GM12878 (cell line): ENCODE measurements at regions of chr6 and their contacts with region 1.

Region 1: GRCh38 chr6:45714741-45715507 is 300.7 kb downstream of the CLIC5 start:
- DNase-seq: peak; percentile 48
- ATAC-seq: peak; percentile 54
- H3K4me3 ChIP-seq: no peak overlapping the region
- H3K27ac ChIP-seq: no peak overlapping the region
- H3K4me1 ChIP-seq: peaks cover 16% of the 10 kb centered on the region
- H3K27me3 ChIP-seq: no peaks in the 10 kb centered on the region
- CTCF ChIP-seq: peak; percentile 61 to 89 (median 75)
- EP300 ChIP-seq: no peak
- POLR2A ChIP-seq: no peak
- RAD21 ChIP-seq: peak; percentile 93

Region 2: DNA sequence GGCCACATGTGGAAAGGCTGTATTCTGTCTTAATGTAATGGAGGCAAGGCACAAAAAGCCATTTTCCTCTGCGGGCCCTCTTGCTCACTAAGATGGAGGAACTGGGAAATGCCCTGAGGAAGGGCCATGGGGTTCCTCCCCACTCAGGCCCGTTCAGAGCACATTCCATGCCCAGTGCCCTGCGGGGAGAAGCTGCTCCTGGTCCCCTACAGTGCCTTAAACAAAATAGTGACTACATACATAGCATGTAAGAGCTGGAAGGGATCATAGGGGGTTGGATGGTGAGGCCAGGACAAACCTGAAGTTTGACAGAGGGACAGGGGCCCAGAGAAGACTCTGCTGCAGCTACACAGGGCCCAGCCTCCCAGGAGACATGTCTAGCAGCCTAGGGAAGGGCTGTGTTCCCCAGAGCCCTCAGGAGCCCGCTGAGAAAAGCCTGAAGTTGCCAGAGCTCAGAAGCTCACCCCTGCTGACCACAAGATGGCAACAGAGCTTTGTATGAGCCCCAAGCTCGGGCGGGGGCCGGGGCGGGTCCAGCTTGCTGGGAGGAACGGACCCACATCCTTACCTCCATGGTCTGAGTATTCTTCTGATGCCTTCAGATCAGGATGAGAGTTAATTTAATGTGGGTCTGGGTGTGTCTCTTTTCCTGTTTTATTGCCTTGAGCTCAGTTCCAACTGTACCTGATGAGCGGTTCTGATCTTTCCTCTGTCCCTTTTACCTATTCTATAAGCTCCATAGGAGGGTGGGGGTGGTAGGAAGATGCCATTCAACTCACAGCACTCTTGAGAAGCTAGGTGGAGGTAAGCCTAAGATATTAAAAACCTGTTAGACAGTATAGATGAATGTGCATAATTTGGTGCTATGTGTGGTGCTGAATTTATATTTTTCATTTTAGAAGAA is 1084.5 kb before region 1 on chr6:
- CTCF ChIA-PET with region 1: interaction called, 25 read pairs
- POLR2A ChIA-PET with region 1: no interaction called
- RAD21 ChIA-PET with region 1: interaction called, 20 read pairs
- SMC1A ChIA-PET with region 1: interaction called, 8 read pairs
- in situ Hi-C with region 1: no loop called
- intact Hi-C with region 1: no loop called
- DNase-seq: no peak
- ATAC-seq: peak; percentile 88
- H3K4me3 ChIP-seq: no peak overlapping the region
- H3K27ac ChIP-seq: no peak overlapping the region
- H3K4me1 ChIP-seq: no peaks in the 10 kb centered on the region
- H3K27me3 ChIP-seq: peaks cover 1 to 3% of the 10 kb centered on the region in 2 experiments; a peak in 2 of 4 replicates
- CTCF ChIP-seq: peak; percentile 33 to 59 (median 49); a peak in 5 of 6 replicates
- EP300 ChIP-seq: no peak
- POLR2A ChIP-seq: no peak
- RAD21 ChIP-seq: peak; percentile 36; the same call in 1 of the 2 replicates

Region 3: DNA sequence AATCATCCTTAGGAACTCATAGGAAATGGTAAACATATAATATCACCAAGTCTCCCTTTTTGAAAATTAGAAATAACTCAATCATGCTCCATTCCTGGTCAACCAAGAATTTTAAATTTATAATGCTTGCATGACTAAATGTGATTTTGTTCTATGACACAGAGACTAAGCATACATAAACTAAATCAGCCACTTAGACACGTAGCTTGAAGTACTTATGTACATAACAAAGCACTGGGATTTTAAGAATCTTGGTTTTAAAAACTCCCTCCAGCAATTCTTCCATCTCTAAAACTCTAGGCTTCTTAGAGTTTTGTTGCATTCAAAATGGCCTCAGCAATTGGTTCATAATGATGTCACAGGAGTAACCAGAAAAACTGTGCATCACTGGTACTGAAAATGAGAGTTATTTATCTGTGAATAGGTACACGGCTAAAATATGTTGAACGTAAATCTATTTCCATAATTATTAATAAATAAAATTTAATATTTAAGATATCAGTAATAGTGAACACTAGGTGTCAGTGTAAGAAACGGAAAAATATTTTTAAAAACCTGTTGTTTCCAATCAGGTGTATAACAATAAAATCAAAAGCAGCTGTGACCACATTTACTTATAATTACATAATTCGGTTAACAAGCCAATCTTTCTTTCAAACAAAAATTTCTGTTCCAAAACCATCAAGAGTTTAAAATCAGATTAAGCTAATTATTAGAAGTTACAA is 628.4 kb before region 1 on chr6:
- CTCF ChIA-PET with region 1: interaction called, 12 read pairs
- POLR2A ChIA-PET with region 1: no interaction called
- RAD21 ChIA-PET with region 1: interaction called, 8 read pairs
- SMC1A ChIA-PET with region 1: interaction called, 7 read pairs
- in situ Hi-C with region 1: no loop called
- intact Hi-C with region 1: loop called (anchors 5 kb)
- DNase-seq: no peak
- ATAC-seq: no peak
- H3K4me3 ChIP-seq: no peak overlapping the region
- H3K27ac ChIP-seq: no peak overlapping the region
- H3K4me1 ChIP-seq: no peaks in the 10 kb centered on the region
- H3K27me3 ChIP-seq: no peaks in the 10 kb centered on the region; a peak in 1 of 4 replicates
- CTCF ChIP-seq: no peak
- EP300 ChIP-seq: no peak
- POLR2A ChIP-seq: no peak
- RAD21 ChIP-seq: no peak

Region 4: GRCh38 chr6:45500924-45501816 is 213.8 kb before region 1 on chr6:
- CTCF ChIA-PET with region 1: interaction called, 23 read pairs
- POLR2A ChIA-PET with region 1: no interaction called
- RAD21 ChIA-PET with region 1: interaction called, 11 read pairs
- SMC1A ChIA-PET with region 1: interaction called, 6 read pairs
- in situ Hi-C with region 1: no loop called
- intact Hi-C with region 1: no loop called
- DNase-seq: no peak
- ATAC-seq: peak; percentile 66
- H3K4me3 ChIP-seq: no peak overlapping the region
- H3K27ac ChIP-seq: no peak overlapping the region
- H3K4me1 ChIP-seq: no peaks in the 10 kb centered on the region
- H3K27me3 ChIP-seq: no peaks in the 10 kb centered on the region; a peak in 1 of 4 replicates
- CTCF ChIP-seq: peak; percentile 11 to 50 (median 46); a peak in 3 of 6 replicates
- EP300 ChIP-seq: no peak
- POLR2A ChIP-seq: no peak
- RAD21 ChIP-seq: peak; percentile 38; the same call in 1 of the 2 replicates

Region 5: GRCh38 chr6:45737331-45738056 is 22.6 kb after region 1 on chr6:
- CTCF ChIA-PET with region 1: interaction called, 19 read pairs
- POLR2A ChIA-PET with region 1: interaction called, 3 read pairs
- RAD21 ChIA-PET with region 1: interaction called, 10 read pairs
- SMC1A ChIA-PET with region 1: interaction called, 23 read pairs
- in situ Hi-C with region 1: no loop called
- intact Hi-C with region 1: loop called (anchors 1 kb)
- DNase-seq: peak; percentile 77
- ATAC-seq: peak; percentile 83
- H3K4me3 ChIP-seq: no peak overlapping the region
- H3K27ac ChIP-seq: peak overlapping the region; percentile 42; the same call in 1 of the 2 replicates
- H3K4me1 ChIP-seq: peaks cover 20% of the 10 kb centered on the region
- H3K27me3 ChIP-seq: no peaks in the 10 kb centered on the region; a peak in 2 of 4 replicates
- CTCF ChIP-seq: no peak
- EP300 ChIP-seq: peak; percentile 92 to 96
- POLR2A ChIP-seq: no peak
- RAD21 ChIP-seq: peak; percentile 15; the same call in 1 of the 2 replicates